ENCODE measurements at regions of chrX and their contacts with region 1.

Region 1: GRCh38 chrX:111098874-111099273 is 2.9 kb downstream of the PAK3 start:
- DNase-seq: peak; percentile 28 to 63 (median 51)
- ATAC-seq: peak; percentile 81
- H3K4me3 ChIP-seq: no peak overlapping the region
- H3K4me3 Mint-ChIP-seq: peak overlapping the region; percentile 23 to 70 (median 50)
- H3K27ac ChIP-seq: no peak overlapping the region
- H3K27ac Mint-ChIP-seq: peak overlapping the region in 4 of 9 donors; percentile 56 to 74 (median 58)
- H3K4me1 ChIP-seq: no peaks in the 10 kb centered on the region
- H3K4me1 Mint-ChIP-seq: peaks cover 13 to 24% (median 15%) of the 10 kb centered on the region in 7 donors
- H3K27me3 ChIP-seq: no peaks in the 10 kb centered on the region
- H3K27me3 Mint-ChIP-seq: peaks cover 5 to 24% (median 13%) of the 10 kb centered on the region in 5 donors

Region 2: DNA sequence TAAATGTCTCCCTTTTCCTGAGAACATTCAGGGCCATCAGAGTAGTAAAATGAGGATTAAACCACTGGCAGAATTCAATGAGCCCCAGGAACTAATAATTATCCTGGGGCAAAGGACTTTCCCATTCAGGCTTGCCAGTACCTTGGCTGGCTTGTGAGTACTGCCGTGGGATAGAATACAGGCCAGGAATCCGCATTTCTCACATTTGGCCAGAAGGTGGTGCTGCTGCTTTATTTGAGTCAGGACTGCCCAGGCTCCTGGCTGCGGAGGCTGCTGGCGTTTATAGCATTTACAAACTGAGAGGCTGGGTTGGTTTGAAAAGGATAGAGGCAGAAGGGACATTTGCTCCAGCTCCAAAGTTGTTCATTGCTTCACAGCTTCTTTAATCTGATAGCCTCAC is 648.8 kb before region 1 on chrX:
- CTCF ChIA-PET with region 1: no interaction called
- POLR2A ChIA-PET with region 1: no interaction called
- intact Hi-C with region 1: loop called in 1 of 2 experiments (anchors 5 kb)
- DNase-seq: peak in 7 of 9 donors; percentile 9 to 50 (median 44)
- ATAC-seq: peak; percentile 64
- H3K4me3 ChIP-seq: no peak overlapping the region
- H3K4me3 Mint-ChIP-seq: no peak overlapping the region
- H3K27ac ChIP-seq: no peak overlapping the region
- H3K27ac Mint-ChIP-seq: no peak overlapping the region
- H3K4me1 ChIP-seq: no peaks in the 10 kb centered on the region
- H3K4me1 Mint-ChIP-seq: no peaks in the 10 kb centered on the region
- H3K27me3 ChIP-seq: peaks cover 0 to 4% of the 10 kb centered on the region in 2 donors
- H3K27me3 Mint-ChIP-seq: peaks cover 4 to 7% (median 5%) of the 10 kb centered on the region in 5 donors

Region 3: GRCh38 chrX:110691446-110691845 is 407.4 kb before region 1 on chrX:
- CTCF ChIA-PET with region 1: no interaction called
- POLR2A ChIA-PET with region 1: no interaction called
- intact Hi-C with region 1: no loop called
- DNase-seq: no peak
- ATAC-seq: no peak
- H3K4me3 ChIP-seq: no peak overlapping the region
- H3K4me3 Mint-ChIP-seq: no peak overlapping the region
- H3K27ac ChIP-seq: no peak overlapping the region
- H3K27ac Mint-ChIP-seq: no peak overlapping the region
- H3K4me1 ChIP-seq: no peaks in the 10 kb centered on the region
- H3K4me1 Mint-ChIP-seq: no peaks in the 10 kb centered on the region
- H3K27me3 ChIP-seq: no peaks in the 10 kb centered on the region
- H3K27me3 Mint-ChIP-seq: no peaks in the 10 kb centered on the region

Region 4: GRCh38 chrX:111071542-111072277 is 27.2 kb before region 1 on chrX:
- CTCF ChIA-PET with region 1: no interaction called
- POLR2A ChIA-PET with region 1: no interaction called
- intact Hi-C with region 1: no loop called
- DNase-seq: no peak
- ATAC-seq: no peak
- H3K4me3 ChIP-seq: no peak overlapping the region
- H3K4me3 Mint-ChIP-seq: no peak overlapping the region
- H3K27ac ChIP-seq: no peak overlapping the region
- H3K27ac Mint-ChIP-seq: no peak overlapping the region
- H3K4me1 ChIP-seq: no peaks in the 10 kb centered on the region
- H3K4me1 Mint-ChIP-seq: no peaks in the 10 kb centered on the region
- H3K27me3 ChIP-seq: no peaks in the 10 kb centered on the region
- H3K27me3 Mint-ChIP-seq: peaks cover 0 to 3% (median 0%) of the 10 kb centered on the region in 5 donors

Region 5: DNA sequence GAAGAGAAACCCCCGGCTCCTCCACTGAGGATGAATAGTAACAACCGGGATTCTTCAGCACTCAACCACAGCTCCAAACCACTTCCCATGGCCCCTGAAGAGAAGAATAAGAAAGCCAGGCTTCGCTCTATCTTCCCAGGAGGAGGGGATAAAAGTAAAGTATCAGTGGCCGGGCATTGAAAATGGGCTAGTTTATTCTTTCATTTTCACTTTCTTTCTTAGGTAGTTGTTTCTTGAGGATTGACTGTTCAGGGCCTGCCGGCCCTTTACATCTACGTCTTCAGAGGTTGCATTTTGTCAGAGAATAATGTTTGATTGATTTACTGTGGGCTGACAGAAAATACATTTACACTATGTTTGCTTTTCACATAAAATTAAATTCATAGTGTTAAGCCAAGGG is 24.3 kb after region 1 on chrX:
- CTCF ChIA-PET with region 1: interaction called, 7 read pairs
- POLR2A ChIA-PET with region 1: no interaction called
- intact Hi-C with region 1: loop called in 1 of 2 experiments (anchors 2 kb)
- DNase-seq: no peak
- ATAC-seq: no peak
- H3K4me3 ChIP-seq: peak overlapping the region; percentile 43
- H3K4me3 Mint-ChIP-seq: peak overlapping the region; percentile 59 to 78 (median 70)
- H3K27ac ChIP-seq: no peak overlapping the region
- H3K27ac Mint-ChIP-seq: peak overlapping the region in 3 of 9 donors; percentile 22 to 83 (median 62)
- H3K4me1 ChIP-seq: peaks cover 0 to 8% of the 10 kb centered on the region in 2 donors
- H3K4me1 Mint-ChIP-seq: peaks cover 0 to 17% (median 0%) of the 10 kb centered on the region in 7 donors
- H3K27me3 ChIP-seq: no peaks in the 10 kb centered on the region
- H3K27me3 Mint-ChIP-seq: peaks cover 0 to 3% (median 0%) of the 10 kb centered on the region in 5 donors

Region 6: DNA sequence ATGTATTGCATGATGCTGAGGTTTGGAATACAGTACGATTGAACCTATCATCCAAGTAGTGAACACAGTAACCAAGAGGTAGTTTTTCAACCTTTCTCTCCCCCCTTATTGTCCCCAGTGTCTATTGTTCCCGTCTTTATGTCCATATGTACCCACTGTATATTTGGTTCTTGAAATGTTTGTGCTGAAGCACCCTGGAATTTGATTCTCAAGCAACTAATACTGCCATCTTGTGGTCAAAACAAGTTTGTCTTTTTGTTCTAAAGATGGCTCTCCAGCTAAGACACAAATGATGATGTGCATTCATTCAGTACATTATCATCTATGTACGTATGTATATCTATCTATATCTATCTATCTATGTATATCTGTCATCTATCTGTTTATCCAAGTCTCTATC is 346.6 kb after region 1 on chrX:
- CTCF ChIA-PET with region 1: no interaction called
- POLR2A ChIA-PET with region 1: no interaction called
- intact Hi-C with region 1: loop called in 1 of 2 experiments (anchors 2 kb)
- DNase-seq: peak in 5 of 9 donors; percentile 0 to 25 (median 13)
- ATAC-seq: no peak
- H3K4me3 ChIP-seq: no peak overlapping the region
- H3K4me3 Mint-ChIP-seq: no peak overlapping the region
- H3K27ac ChIP-seq: no peak overlapping the region
- H3K27ac Mint-ChIP-seq: no peak overlapping the region
- H3K4me1 ChIP-seq: no peaks in the 10 kb centered on the region
- H3K4me1 Mint-ChIP-seq: peaks cover 0 to 1% (median 0%) of the 10 kb centered on the region in 7 donors
- H3K27me3 ChIP-seq: no peaks in the 10 kb centered on the region
- H3K27me3 Mint-ChIP-seq: peaks cover 0 to 12% (median 0%) of the 10 kb centered on the region in 5 donors

Measured in naive thymus-derived CD4-positive, alpha-beta T cell (primary cell).